Activated naive CD8-positive, alpha-beta T cell treated with anti-CD3 and anti-CD28 coated beads, Interleukin-2, amount 10 ng/mL, durations not matched to agents 7 days and 5 days (primary cell): ENCODE measurements at regions of chr3 and their contacts with region 1.

Region 1: DNA sequence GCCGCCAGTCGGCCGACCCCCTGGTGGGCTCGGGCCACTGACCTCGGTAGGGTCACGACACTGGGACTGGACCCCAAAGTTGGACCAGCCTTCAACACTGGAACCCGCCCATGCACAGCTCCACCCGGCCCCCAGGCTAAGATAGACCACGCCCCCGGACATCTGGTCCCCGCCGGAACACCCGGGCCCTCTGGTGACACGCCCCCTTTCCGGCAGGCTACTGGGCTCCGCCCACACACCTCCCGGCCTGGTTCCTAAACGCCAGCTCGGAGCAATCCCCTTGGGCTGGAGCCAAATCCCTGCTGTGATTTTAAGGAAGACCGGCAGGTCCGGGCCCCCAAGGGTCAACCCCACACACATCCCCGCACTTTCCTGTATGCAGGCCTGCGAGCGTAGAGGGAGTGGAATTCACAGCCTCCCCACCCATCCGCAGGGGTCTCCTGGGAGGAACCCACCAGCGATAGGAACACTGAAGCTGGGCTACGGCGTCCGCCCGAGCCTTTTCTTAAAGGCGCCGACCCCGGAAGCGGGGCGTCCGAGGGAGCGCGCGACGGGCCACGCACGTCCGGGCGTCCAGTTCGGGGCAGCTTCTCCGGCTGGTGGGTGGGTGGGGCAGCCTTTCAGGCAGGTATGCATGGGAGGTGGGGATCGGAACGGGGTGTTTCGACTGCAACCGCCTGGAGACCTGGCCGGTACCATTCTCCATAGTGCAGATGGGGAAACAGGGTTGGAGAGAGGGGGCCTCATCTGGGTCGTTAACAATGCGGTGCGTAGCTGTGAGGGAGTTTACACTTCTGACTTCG is at the start of gene HEMK1:
- DNase-seq: peak; percentile 94
- ATAC-seq: peak; percentile 27
- H3K4me3 Mint-ChIP-seq: peak within 1 kb of the TSS; percentile 96
- H3K27ac Mint-ChIP-seq: peak within 1 kb of the TSS; percentile 99
- H3K4me1 Mint-ChIP-seq: peaks cover 59% of the 10 kb centered on the region
- H3K27me3 Mint-ChIP-seq: no peaks in the 10 kb centered on the region
- total RNA-seq, gene HEMK1: 97.4 to 102 TPM

Region 2: GRCh38 chr3:50337191-50337841 is 231.8 kb before region 1 on chr3:
- POLR2A ChIA-PET with region 1: interaction called, 225 read pairs
- DNase-seq: peak; percentile 93
- ATAC-seq: peak; percentile 69
- H3K4me3 Mint-ChIP-seq: peak overlapping the region; percentile 99
- H3K27ac Mint-ChIP-seq: peak overlapping the region; percentile 99
- H3K4me1 Mint-ChIP-seq: peaks cover 43% of the 10 kb centered on the region
- H3K27me3 Mint-ChIP-seq: no peaks in the 10 kb centered on the region

Region 3: GRCh38 chr3:50550079-50550741 is 18.9 kb before region 1 on chr3:
- POLR2A ChIA-PET with region 1: interaction called, 37 read pairs
- DNase-seq: peak; percentile 79
- ATAC-seq: peak; percentile 62
- H3K4me3 Mint-ChIP-seq: no peak overlapping the region
- H3K27ac Mint-ChIP-seq: peak overlapping the region; percentile 34
- H3K4me1 Mint-ChIP-seq: peaks cover 2% of the 10 kb centered on the region
- H3K27me3 Mint-ChIP-seq: no peaks in the 10 kb centered on the region

Region 4: DNA sequence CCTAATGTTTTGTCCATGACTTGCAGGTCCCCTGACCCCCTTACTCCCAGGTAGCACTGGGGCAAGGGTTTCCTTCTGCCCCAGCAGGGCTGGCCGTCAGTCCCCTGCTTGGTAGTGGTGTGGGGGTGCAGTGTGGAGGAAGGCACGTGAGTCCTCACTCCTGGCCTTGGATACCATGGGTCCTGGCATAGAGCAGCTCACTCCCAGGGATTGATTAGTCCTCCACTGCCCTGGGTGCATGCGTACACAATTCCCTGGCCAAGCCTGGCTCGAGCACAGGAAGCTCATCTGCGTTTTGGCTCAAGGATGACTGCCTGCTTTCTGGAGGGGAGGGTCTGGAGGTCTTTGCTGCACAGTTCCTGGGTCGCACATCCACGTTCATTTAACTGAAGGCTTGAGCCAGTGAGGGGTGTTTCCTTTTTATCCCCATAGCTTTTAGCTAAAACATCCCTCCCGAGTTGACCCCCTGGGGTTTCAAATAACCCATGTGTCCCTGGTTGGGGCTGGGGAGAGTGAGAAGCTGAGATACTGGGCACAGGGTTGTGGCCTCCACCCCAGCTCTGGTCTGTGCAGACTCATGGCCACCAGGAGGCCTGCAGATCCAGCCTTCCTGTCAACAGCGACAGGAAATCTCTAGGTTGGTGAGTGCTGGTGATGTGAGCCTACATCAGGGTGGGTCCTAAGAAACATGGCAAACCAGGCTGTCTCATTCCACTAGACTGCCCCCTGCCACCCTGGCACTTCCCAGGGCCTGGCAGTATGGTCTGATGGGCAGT is 11.7 kb after region 1 on chr3:
- POLR2A ChIA-PET with region 1: interaction called, 958 read pairs
- DNase-seq: no peak
- ATAC-seq: peak; percentile 78
- H3K4me3 Mint-ChIP-seq: no peak overlapping the region
- H3K27ac Mint-ChIP-seq: peak overlapping the region; percentile 85
- H3K4me1 Mint-ChIP-seq: peaks cover 59% of the 10 kb centered on the region
- H3K27me3 Mint-ChIP-seq: no peaks in the 10 kb centered on the region

Region 5: DNA sequence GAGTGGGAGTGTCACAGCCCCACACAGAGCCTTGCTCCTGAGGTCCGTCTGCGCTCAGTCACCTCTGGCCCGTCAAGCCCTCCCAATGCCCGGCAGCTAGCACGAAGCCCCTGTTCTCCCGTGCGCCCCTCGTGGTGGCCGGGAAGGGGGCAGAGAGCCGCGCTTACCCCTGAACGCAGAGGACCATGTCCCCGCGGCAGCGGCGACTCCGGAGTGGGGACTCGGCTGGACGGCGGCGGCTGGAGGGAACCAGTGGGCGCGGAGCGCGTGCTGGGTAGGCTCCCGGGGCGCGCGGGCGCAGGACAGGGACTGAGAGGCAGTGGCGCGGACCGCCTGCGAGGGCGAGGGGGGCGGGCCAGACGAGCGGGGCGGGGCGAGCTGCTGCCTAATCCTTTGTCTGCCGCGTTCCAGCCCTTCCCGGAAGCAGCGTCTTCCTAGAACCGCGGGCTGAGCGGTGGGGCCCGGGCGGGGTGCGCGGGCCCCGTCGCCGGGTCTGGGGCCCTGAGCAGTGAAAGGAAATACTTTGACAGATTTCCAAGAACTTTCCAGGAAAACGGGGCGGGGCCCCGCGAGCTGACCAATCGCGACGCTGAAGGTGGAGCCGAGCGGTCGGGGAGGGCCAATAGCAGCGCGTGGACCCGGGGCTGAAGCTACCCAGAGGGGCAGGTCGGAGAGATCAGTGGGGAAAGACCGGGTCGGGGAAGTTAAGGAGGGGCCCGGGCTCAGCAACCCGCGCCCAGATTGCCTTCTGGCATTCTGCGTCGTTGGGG is 42.5 kb after region 1 on chr3 and contains the start of gene CISH:
- POLR2A ChIA-PET with region 1: interaction called, 3,572 read pairs
- DNase-seq: peak; percentile 98
- ATAC-seq: peak; percentile 63
- H3K4me3 Mint-ChIP-seq: peak within 1 kb of the TSS; percentile 97
- H3K27ac Mint-ChIP-seq: peak within 1 kb of the TSS; percentile 100
- H3K4me1 Mint-ChIP-seq: peaks cover 36% of the 10 kb centered on the region
- H3K27me3 Mint-ChIP-seq: no peaks in the 10 kb centered on the region
- total RNA-seq, gene CISH: 365 to 400 TPM

Region 6: GRCh38 chr3:51384726-51385473 is 815.8 kb after region 1 on chr3 and contains the start of gene MANF:
- POLR2A ChIA-PET with region 1: interaction called, 17 read pairs
- DNase-seq: peak; percentile 95
- ATAC-seq: peak; percentile 97
- H3K4me3 Mint-ChIP-seq: peak within 1 kb of the TSS; percentile 91
- H3K27ac Mint-ChIP-seq: peak within 1 kb of the TSS; percentile 95
- H3K4me1 Mint-ChIP-seq: peaks cover 37% of the 10 kb centered on the region
- H3K27me3 Mint-ChIP-seq: no peaks in the 10 kb centered on the region
- total RNA-seq, gene MANF: 86.2 to 88.2 TPM